IMR-90 (cell line): ENCODE measurements at regions of chr6 and their contacts with region 1.

Region 1: DNA sequence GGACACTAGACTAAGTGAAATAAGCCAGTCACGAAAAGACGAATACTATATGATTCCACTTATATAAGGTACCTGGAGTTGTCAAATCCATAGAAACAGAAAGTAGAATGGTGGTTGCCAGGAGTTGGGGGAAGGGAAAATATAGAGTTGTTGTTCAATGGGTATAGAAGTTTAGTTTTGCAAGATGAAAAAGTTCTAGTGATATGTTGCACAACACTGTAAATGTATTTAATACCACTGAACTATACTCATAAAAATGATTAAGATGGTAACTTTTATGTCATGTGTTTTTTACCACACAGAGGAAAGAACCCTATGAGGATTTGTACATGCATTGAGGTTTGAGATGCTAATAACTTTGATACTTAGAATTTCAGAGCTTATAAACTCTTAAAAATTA is 46.0 kb upstream of the TRAM2 start:
- DNase-seq: no peak
- ATAC-seq: no peak
- H3K4me3 ChIP-seq: no peak overlapping the region
- H3K27ac ChIP-seq: no peak overlapping the region
- H3K4me1 ChIP-seq: peaks cover 8% of the 10 kb centered on the region; the same call in 1 of the 2 replicates
- H3K27me3 ChIP-seq: no peaks in the 10 kb centered on the region
- CTCF ChIP-seq: no peak
- POLR2A ChIP-seq: no peak
- RAD21 ChIP-seq: no peak

Region 2: GRCh38 chr6:52635049-52635577 is 12.3 kb after region 1 on chr6:
- CTCF ChIA-PET with region 1: no interaction called
- POLR2A ChIA-PET with region 1: no interaction called
- dilution Hi-C with region 1: no loop called
- in situ Hi-C with region 1: no loop called
- intact Hi-C with region 1: loop called (anchors 1 kb)
- DNase-seq: peak; percentile 46
- ATAC-seq: peak; percentile 63
- H3K4me3 ChIP-seq: no peak overlapping the region
- H3K27ac ChIP-seq: peak overlapping the region; percentile 69; the same call in 1 of the 2 replicates
- H3K4me1 ChIP-seq: peaks cover 4% of the 10 kb centered on the region
- H3K27me3 ChIP-seq: no peaks in the 10 kb centered on the region
- CTCF ChIP-seq: no peak
- POLR2A ChIP-seq: no peak
- RAD21 ChIP-seq: no peak

Region 3: GRCh38 chr6:52749556-52750152 is 126.8 kb after region 1 on chr6:
- CTCF ChIA-PET with region 1: no interaction called
- POLR2A ChIA-PET with region 1: no interaction called
- dilution Hi-C with region 1: no loop called
- in situ Hi-C with region 1: no loop called
- intact Hi-C with region 1: no loop called
- DNase-seq: no peak
- ATAC-seq: no peak
- H3K4me3 ChIP-seq: no peak overlapping the region
- H3K27ac ChIP-seq: no peak overlapping the region
- H3K4me1 ChIP-seq: peaks cover 2% of the 10 kb centered on the region; the same call in 1 of the 2 replicates
- H3K27me3 ChIP-seq: peaks cover 5% of the 10 kb centered on the region
- CTCF ChIP-seq: no peak
- POLR2A ChIP-seq: no peak
- RAD21 ChIP-seq: no peak